ENCODE measurements at regions of chr14 and their contacts with region 1.

Region 1: DNA sequence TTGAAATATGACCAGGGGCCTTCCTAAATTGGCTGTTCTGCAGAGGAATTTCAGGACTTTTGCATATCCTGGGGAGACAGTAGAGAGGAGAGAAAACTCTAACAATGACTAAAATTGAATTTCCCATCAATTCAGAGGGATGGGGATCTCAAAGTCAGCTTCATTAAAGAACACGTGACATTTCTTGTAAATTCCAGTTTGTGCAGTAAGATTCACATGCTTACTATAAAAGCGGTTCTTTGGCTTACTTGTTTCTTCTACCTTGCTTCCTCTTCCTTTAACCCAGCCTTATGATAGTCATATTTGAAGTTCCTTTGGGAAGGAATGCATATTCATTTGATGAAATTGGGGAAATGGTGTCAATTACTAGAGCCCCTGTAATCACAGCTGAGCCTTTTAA is 143.7 kb upstream of the GZMB start:
- DNase-seq: no peak
- CTCF ChIP-seq: no peak

Region 2: GRCh38 chr14:24741871-24742270 is 35.8 kb before region 1 on chr14:
- CTCF ChIA-PET with region 1: no interaction called
- POLR2A ChIA-PET with region 1: no interaction called
- DNase-seq: no peak
- CTCF ChIP-seq: no peak

Region 3: GRCh38 chr14:24789378-24789884 is 11.8 kb after region 1 on chr14:
- CTCF ChIA-PET with region 1: interaction called, 10 read pairs
- POLR2A ChIA-PET with region 1: no interaction called
- DNase-seq: no peak
- CTCF ChIP-seq: no peak